ENCODE measurements at regions of chr1 and their contacts with region 1.

Region 1: GRCh38 chr1:63773815-63774616 is at the start of gene ROR1:
- DNase-seq: peak; percentile 90
- H3K4me3 ChIP-seq: peak within 1 kb of the TSS; percentile 67 to 72
- H3K27ac ChIP-seq: peak within 1 kb of the TSS; percentile 77 to 84
- H3K4me1 ChIP-seq: peaks cover 6% of the 10 kb centered on the region
- H3K27me3 ChIP-seq: no peaks in the 10 kb centered on the region
- CTCF ChIP-seq: peak in 2 of 3 experiments; percentile 57 to 69
- POLR2A ChIP-seq: no peak
- total RNA-seq, gene ROR1: 3.3 to 5.1 TPM

Region 2: DNA sequence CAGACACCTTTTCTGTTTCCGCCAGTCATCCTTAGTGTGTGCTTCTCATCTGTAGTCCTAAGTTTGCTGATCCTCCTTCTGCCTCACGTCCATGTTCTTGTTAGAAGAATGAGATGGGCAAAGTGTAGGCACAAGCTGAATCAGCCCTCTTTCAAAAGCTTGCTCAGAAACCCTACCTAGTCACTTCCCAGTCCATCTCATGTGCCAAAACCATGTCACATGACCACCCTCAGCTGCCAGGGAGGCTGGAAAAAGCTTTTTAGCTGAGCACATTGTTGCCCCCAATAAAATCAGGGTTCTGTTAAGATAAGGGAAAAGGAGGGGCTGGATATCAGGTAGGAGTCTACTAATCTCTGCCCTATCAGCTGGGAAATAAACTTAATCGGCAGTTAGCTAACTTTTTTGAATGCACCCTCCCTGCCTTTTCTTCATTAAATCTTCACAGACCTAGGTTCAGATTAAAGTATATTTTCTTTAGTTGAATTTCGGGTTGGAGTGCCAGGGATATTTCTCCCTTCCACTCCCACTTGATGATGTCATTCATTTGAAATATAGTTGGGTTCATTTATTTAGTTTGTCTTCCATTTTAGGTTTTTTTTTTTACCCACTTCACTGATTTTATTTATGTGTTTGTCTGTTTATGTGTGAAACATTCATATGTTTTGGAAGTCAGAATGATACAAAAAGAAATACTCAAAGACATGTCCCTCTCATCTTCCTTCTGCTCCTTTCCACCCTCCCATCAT is 129.0 kb after region 1 on chr1:
- intact Hi-C with region 1: no loop called
- DNase-seq: no peak
- H3K4me3 ChIP-seq: no peak overlapping the region
- H3K27ac ChIP-seq: no peak overlapping the region
- H3K4me1 ChIP-seq: no peaks in the 10 kb centered on the region
- H3K27me3 ChIP-seq: no peaks in the 10 kb centered on the region
- CTCF ChIP-seq: no peak
- POLR2A ChIP-seq: no peak

Region 3: GRCh38 chr1:63946866-63947491 is 173.0 kb after region 1 on chr1:
- intact Hi-C with region 1: no loop called
- DNase-seq: no peak
- H3K4me3 ChIP-seq: no peak overlapping the region
- H3K27ac ChIP-seq: no peak overlapping the region
- H3K4me1 ChIP-seq: no peaks in the 10 kb centered on the region
- H3K27me3 ChIP-seq: no peaks in the 10 kb centered on the region
- CTCF ChIP-seq: no peak
- POLR2A ChIP-seq: no peak

Region 4: DNA sequence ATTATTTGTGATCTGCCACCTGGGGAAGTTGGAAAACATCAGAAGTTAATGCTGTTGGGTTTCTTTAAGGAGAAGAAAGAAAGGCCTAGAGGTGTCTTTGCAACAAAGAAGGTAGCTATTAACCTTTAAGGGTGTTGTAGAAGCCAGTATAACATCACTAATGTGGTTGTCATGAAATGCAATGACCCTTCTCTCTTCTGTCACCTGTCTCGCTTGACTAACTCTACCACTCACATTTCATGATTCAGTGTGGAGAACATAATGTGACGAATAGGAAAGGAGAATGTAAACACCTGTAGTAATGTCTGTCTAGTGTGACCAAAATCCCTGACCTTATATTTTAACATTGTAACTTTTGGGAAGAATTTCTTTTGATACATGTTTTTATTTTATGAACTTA is 217.7 kb after region 1 on chr1:
- intact Hi-C with region 1: no loop called
- DNase-seq: no peak
- H3K4me3 ChIP-seq: no peak overlapping the region
- H3K27ac ChIP-seq: no peak overlapping the region
- H3K4me1 ChIP-seq: no peaks in the 10 kb centered on the region
- H3K27me3 ChIP-seq: no peaks in the 10 kb centered on the region
- CTCF ChIP-seq: no peak
- POLR2A ChIP-seq: no peak

Region 5: DNA sequence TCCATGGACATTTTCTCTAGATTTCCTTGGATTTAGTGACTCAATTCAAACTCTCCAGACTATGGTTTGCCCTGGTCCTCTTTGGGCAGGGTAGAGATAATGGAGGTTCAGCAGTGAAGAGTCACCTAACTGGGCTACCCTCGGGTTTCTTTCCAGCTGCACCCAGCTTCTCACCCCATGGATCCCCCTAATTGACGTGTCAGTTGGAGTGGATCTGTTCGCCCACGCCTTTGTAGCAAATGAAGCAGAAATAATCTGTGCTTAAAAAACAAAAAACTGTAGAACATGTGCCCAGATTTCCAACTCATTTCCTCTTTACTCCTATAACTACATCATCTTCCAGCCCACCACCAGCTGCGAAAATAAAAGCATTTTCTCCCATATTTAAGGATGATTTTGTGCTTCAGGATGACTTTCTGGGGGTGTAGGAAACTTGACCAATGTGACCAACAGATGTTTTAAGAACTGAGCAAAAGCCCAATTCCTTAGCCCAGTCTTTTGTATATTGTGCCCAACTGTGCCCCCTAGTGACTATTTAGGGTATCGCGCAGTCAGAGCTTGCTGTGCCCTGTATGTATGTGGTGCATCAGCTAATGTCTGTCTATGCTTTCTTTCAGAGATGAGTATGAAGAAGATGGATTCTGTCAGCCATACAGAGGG is 362.9 kb after region 1 on chr1:
- intact Hi-C with region 1: loop called (anchors 5 kb)
- DNase-seq: peak; percentile 94
- H3K4me3 ChIP-seq: no peak overlapping the region
- H3K27ac ChIP-seq: no peak overlapping the region
- H3K4me1 ChIP-seq: peaks cover 4% of the 10 kb centered on the region
- H3K27me3 ChIP-seq: no peaks in the 10 kb centered on the region
- CTCF ChIP-seq: peak; percentile 81 to 92 (median 90)
- POLR2A ChIP-seq: no peak